Activated CD4-positive, alpha-beta memory T cell treated with anti-CD3 and anti-CD28 coated beads, Interleukin-2, amount 10 ng/mL, durations not matched to agents 7 days and 5 days (primary cell): ENCODE measurements at regions of chr3 and their contacts with region 1.

Region 1: GRCh38 chr3:63993653-63994079 is 29.6 kb downstream of the PSMD6 start:
- DNase-seq: peak; percentile 57
- H3K4me3 Mint-ChIP-seq: no peak overlapping the region
- H3K27ac Mint-ChIP-seq: no peak overlapping the region
- H3K4me1 Mint-ChIP-seq: peaks cover 29% of the 10 kb centered on the region
- H3K27me3 Mint-ChIP-seq: no peaks in the 10 kb centered on the region

Region 2: GRCh38 chr3:63961891-63962290 is 31.8 kb before region 1 on chr3:
- CTCF ChIA-PET with region 1: interaction called, 106 read pairs
- POLR2A ChIA-PET with region 1: interaction called, 32 read pairs
- DNase-seq: no peak
- H3K4me3 Mint-ChIP-seq: no peak overlapping the region
- H3K27ac Mint-ChIP-seq: no peak overlapping the region
- H3K4me1 Mint-ChIP-seq: peaks cover 58% of the 10 kb centered on the region
- H3K27me3 Mint-ChIP-seq: no peaks in the 10 kb centered on the region

Region 3: GRCh38 chr3:63967675-63968611 is 25.7 kb before region 1 on chr3:
- CTCF ChIA-PET with region 1: interaction called, 106 read pairs
- POLR2A ChIA-PET with region 1: interaction called, 32 read pairs
- DNase-seq: peak; percentile 49
- H3K4me3 Mint-ChIP-seq: peak overlapping the region; percentile 80
- H3K27ac Mint-ChIP-seq: peak overlapping the region; percentile 98
- H3K4me1 Mint-ChIP-seq: peaks cover 87% of the 10 kb centered on the region
- H3K27me3 Mint-ChIP-seq: no peaks in the 10 kb centered on the region

Region 4: DNA sequence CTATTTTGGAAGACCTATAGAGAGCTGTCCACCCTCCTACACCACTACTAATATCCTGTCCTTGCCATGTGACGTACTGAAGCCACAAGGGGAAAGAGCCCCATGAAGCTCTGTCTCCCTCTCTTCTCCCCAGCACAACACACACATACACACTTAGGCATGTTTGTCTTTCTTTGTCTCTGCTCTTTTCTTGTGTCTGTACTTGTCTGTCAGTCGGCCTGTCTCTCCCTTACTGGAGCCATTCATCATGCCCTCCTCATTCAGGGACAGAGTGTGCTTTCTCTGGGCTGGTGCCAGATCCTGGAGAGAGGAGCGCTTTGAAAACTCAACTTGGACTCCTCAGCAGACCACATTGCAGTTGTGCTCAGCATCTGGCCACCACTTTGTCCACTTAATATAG is 17.9 kb before region 1 on chr3:
- CTCF ChIA-PET with region 1: interaction called, 99 read pairs
- POLR2A ChIA-PET with region 1: interaction called, 7 read pairs
- DNase-seq: no peak
- H3K4me3 Mint-ChIP-seq: no peak overlapping the region
- H3K27ac Mint-ChIP-seq: peak overlapping the region; percentile 50
- H3K4me1 Mint-ChIP-seq: peaks cover 94% of the 10 kb centered on the region
- H3K27me3 Mint-ChIP-seq: no peaks in the 10 kb centered on the region

Region 5: DNA sequence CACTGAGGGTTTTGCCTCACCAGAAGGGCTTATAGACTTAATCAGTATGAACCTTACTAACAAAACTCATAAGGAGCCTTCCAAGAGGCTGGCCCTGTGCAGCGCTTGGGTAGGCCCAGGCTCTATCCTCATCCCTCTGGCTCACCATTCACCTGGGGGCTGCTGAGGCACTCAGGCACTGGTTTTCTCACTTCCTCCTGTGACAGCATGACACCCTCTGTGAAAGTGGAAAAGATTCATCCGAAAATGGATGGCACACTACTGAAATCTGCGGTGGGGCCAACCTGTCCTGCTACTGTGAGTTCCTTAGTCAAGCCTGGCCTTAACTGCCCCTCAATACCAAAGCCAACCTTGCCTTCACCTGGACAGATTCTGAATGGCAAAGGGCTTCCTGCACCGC is 11.7 kb before region 1 on chr3:
- CTCF ChIA-PET with region 1: interaction called, 99 read pairs
- POLR2A ChIA-PET with region 1: interaction called, 7 read pairs
- DNase-seq: no peak
- H3K4me3 Mint-ChIP-seq: no peak overlapping the region
- H3K27ac Mint-ChIP-seq: peak overlapping the region; percentile 33
- H3K4me1 Mint-ChIP-seq: peaks cover 85% of the 10 kb centered on the region
- H3K27me3 Mint-ChIP-seq: no peaks in the 10 kb centered on the region

Region 6: DNA sequence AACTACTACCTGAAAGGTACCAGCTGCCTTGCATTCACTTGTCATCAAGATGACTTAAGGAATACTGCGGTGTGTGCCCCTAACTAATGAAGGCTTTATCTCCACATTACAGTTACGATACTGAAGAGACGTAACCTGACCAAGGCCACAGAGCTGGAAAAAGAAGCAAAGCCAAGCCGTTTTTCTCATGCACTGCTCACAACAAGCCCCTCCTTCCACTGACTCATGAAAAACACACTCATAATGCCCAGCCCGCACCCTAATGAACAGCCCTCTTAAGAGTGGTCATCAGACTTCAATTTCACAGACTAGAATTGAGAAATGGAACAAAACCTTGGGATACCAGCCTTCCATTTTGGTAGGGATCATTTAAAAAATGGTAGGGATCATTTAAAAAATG is 18.0 kb after region 1 on chr3:
- CTCF ChIA-PET with region 1: interaction called, 25 read pairs
- POLR2A ChIA-PET with region 1: interaction called, 8 read pairs
- DNase-seq: no peak
- H3K4me3 Mint-ChIP-seq: no peak overlapping the region
- H3K27ac Mint-ChIP-seq: no peak overlapping the region
- H3K4me1 Mint-ChIP-seq: peaks cover 46% of the 10 kb centered on the region
- H3K27me3 Mint-ChIP-seq: no peaks in the 10 kb centered on the region

Region 7: GRCh38 chr3:64037084-64037483 is 43.4 kb after region 1 on chr3:
- CTCF ChIA-PET with region 1: no interaction called
- POLR2A ChIA-PET with region 1: no interaction called
- DNase-seq: no peak
- H3K4me3 Mint-ChIP-seq: no peak overlapping the region
- H3K27ac Mint-ChIP-seq: no peak overlapping the region
- H3K4me1 Mint-ChIP-seq: no peaks in the 10 kb centered on the region
- H3K27me3 Mint-ChIP-seq: peaks cover 27% of the 10 kb centered on the region